ENCODE measurements at regions of chr4 and their contacts with region 1.

Region 1: DNA sequence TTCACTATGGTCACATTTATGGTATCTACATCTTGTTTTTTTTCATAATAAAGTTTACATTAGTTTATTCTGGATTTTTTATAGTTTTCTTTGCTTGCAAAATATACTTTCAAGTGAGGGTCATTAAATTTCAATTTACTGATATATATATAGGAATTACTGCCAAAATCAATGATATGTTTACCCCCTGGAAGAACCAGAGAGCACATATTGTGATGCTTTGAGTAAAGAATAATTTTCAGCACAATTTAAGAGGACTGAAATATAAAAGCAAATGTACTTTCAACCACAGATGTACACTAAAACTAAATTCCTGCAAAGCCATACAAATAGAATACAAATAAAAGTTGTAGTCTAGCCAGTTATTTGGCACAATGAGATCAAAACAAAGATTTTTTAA is 242.2 kb upstream of the PCDH18 start:
- DNase-seq: no peak
- H3K4me3 Mint-ChIP-seq: no peak overlapping the region
- H3K27ac Mint-ChIP-seq: no peak overlapping the region
- H3K4me1 Mint-ChIP-seq: no peaks in the 10 kb centered on the region
- H3K27me3 Mint-ChIP-seq: no peaks in the 10 kb centered on the region
- CTCF ChIP-seq: no peak

Region 2: GRCh38 chr4:138096384-138097062 is 322.0 kb after region 1 on chr4:
- CTCF ChIA-PET with region 1: interaction called, 15 read pairs
- intact Hi-C with region 1: no loop called
- DNase-seq: no peak
- H3K4me3 Mint-ChIP-seq: no peak overlapping the region
- H3K27ac Mint-ChIP-seq: no peak overlapping the region
- H3K4me1 Mint-ChIP-seq: peaks cover 15% of the 10 kb centered on the region
- H3K27me3 Mint-ChIP-seq: no peaks in the 10 kb centered on the region
- CTCF ChIP-seq: no peak

Measured in Calu3 (cell line).